Psoas muscle (tissue), 8 donors: ENCODE measurements at regions of chr16 and their contacts with region 1.

Region 1: DNA sequence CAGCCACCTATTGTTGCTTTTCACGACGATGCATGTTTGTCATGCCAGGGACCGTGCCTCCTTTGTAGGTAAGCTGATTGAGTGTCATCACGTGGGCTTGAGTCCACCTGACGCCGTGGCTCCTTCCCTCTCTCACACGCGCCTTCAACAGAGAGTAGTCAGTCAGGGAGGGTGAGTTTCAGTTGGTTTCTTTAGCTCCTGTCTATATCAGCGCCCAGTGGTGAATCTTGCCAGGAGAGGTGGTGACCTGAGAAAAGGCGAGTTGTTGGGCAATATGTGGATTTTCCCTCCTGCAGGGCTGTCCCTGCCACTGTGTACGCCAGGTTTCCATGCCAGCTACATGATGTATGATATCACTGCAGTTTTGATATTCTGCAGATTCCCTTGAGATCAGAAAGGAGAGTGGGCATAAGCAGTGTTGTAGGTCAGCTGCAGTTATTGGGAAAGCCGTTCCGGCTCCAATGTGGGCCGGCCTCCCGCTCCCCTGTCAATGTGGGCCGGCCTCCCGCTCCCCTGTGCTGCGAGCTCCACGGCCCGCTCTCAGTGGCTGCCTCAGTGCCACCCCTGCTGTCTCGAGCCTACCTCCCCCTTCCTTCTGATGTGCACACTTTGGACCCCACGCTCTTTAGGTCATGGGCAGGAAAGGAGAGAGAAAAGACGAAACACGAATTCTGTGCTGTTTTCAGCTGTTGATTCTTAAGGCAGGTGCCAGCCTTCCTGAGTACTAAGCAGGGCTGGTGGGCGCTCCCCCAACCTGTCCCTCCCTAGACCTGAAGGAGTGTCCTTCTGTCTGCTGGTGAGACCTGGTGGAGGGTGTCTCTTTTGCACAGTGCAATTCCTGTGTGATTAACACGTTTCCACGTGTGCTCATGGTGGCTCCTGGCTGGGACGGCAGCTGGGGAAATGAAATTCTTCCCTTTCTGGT is 31.5 kb downstream of the BANP start:
- DNase-seq: no peak
- ATAC-seq: no peak
- H3K4me3 ChIP-seq: no peak overlapping the region
- H3K27ac ChIP-seq: peak overlapping the region; percentile 68
- H3K4me1 ChIP-seq: peaks cover 19% of the 10 kb centered on the region
- H3K27me3 ChIP-seq: no peaks in the 10 kb centered on the region
- CTCF ChIP-seq: no peak

Region 2: DNA sequence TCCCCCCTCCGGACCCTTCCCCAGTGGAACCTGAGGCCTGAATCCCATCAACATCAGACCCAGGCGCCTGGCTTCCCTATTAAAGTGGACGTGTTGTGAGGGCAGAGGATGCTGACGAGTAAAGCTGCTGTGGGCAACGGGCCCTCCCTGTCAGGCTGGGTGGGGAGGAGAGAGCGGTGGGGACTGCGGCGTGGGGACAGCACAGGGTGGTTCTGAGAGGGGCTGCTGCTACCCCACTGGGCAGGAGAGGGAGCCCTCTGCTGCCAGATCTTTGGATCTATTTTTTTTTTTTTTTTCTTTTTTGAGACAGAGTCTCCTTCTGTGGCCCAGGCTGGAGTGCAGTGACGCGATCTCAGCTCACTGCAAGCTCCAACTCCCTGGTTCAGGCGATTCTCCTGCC is 52.3 kb before region 1 on chr16:
- intact Hi-C with region 1: no loop called
- DNase-seq: no peak
- ATAC-seq: no peak
- H3K4me3 ChIP-seq: no peak overlapping the region
- H3K27ac ChIP-seq: no peak overlapping the region
- H3K4me1 ChIP-seq: no peaks in the 10 kb centered on the region
- H3K27me3 ChIP-seq: peaks cover 0 to 3% (median 0%) of the 10 kb centered on the region in 3 donors
- CTCF ChIP-seq: no peak

Region 3: DNA sequence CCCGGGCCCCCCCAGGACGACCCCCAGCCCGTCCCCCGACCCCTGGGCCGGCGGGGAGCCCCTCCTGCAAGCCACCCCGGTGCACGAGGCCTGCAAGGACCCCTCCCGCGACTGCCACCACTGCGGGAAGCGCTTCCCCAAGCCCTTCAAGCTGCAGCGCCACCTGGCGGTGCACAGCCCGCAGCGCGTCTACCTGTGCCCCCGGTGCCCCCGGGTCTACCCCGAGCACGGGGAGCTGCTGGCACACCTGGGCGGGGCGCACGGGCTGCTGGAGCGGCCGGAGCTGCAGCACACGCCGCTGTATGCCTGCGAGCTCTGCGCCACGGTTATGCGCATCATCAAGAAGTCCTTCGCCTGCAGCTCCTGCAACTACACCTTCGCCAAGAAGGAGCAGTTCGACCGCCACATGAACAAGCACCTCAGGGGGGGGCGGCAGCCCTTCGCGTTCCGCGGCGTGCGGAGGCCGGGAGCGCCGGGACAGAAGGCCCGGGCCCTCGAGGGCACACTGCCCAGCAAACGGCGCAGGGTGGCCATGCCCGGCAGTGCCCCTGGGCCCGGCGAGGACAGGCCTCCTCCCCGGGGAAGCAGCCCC is 454.7 kb after region 1 on chr16:
- intact Hi-C with region 1: loop called in 1 of 2 experiments (anchors 5 kb)
- DNase-seq: peak in 1 of 2 donors; percentile 81
- ATAC-seq: peak; percentile 60 to 83 (median 72)
- H3K4me3 ChIP-seq: no peak overlapping the region
- H3K27ac ChIP-seq: no peak overlapping the region
- H3K4me1 ChIP-seq: no peaks in the 10 kb centered on the region
- H3K27me3 ChIP-seq: peaks cover 0 to 17% (median 2%) of the 10 kb centered on the region in 3 donors
- CTCF ChIP-seq: peak; percentile 82